Posterior cingulate gyrus (tissue), 11 donors: ENCODE measurements at regions of chr17 and their contacts with region 1.

Region 1: GRCh38 chr17:77494664-77495435 is 354.1 kb downstream of the SEC14L1 start:
- DNase-seq: peak; percentile 66 to 97 (median 79)

Region 2: GRCh38 chr17:77331301-77331864 is 163.5 kb before region 1 on chr17:
- intact Hi-C with region 1: loop called (anchors 1 kb)
- DNase-seq: peak; percentile 75 to 98 (median 92)

Region 3: DNA sequence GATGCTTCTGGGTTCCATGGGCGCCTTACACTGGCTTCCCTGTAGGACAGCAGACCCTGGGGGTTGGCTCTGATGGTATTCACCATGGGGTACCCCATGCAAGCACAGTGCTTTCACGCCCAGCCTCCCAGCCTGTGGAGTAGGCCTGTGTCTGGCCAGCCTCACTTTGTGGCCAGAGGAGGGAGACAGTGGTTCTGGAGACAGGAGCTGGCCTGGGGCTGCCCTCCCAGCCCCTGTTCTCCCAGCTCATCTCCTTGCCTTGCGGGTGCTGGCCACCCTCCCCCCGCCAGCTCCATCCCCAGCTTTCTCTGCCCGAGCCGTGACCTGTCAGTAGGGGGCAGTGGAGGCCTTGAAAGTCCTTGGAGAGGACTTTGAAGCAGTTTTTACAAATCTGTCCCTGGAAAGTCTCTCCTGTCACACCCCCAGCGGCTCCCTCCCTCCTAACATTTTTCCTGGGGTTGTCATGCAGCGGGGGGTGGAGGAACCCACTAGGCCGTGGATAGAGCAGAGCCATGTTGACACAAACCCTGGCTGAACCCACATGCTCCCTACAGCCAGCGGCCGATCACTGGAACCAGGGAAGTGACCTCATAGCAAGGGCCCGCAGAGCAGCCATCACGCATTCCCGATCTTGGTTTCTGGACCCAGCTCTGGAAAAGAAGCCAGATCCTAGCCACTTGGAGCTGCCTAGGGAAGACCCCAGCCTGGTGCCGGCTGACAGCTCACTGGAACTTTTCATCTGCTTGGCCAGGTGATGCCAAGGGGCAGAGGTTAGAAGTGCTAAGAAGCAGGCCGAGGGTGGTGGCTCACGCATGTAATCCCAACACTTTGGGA is 64.7 kb before region 1 on chr17:
- intact Hi-C with region 1: loop called (anchors 1 kb)
- DNase-seq: peak; percentile 57 to 97 (median 84)